A549 (cell line): ENCODE measurements at regions of chr20 and their contacts with region 1.

Region 1: GRCh38 chr20:49508435-49509199 is 26.1 kb upstream of the KCNB1 start:
- DNase-seq: peak; percentile 52 to 61
- ATAC-seq: peak; percentile 66 to 80
- H3K4me3 ChIP-seq: no peak overlapping the region
- H3K27ac ChIP-seq: peak overlapping the region; percentile 21 to 50; a peak in 2 of 6 replicates
- H3K4me1 ChIP-seq: peaks cover 12% of the 10 kb centered on the region; the same call in 1 of the 3 replicates
- CTCF ChIP-seq: peak; percentile 81
- EP300 ChIP-seq: no peak
- POLR2A ChIP-seq: no peak
- RAD21 ChIP-seq: peak; percentile 67 to 72

Region 2: GRCh38 chr20:49323622-49324238 is 184.9 kb before region 1 on chr20:
- CTCF ChIA-PET with region 1: interaction called, 219 read pairs
- POLR2A ChIA-PET with region 1: no interaction called
- DNase-seq: peak in 1 of 2 experiments; percentile 47
- ATAC-seq: peak; percentile 58 to 68
- H3K4me3 ChIP-seq: no peak overlapping the region
- H3K27ac ChIP-seq: no peak overlapping the region
- H3K4me1 ChIP-seq: peaks cover 4% of the 10 kb centered on the region; the same call in 1 of the 3 replicates
- CTCF ChIP-seq: no peak
- EP300 ChIP-seq: no peak
- POLR2A ChIP-seq: no peak
- RAD21 ChIP-seq: peak; percentile 33 to 44; a peak in 2 of 5 replicates

Region 3: DNA sequence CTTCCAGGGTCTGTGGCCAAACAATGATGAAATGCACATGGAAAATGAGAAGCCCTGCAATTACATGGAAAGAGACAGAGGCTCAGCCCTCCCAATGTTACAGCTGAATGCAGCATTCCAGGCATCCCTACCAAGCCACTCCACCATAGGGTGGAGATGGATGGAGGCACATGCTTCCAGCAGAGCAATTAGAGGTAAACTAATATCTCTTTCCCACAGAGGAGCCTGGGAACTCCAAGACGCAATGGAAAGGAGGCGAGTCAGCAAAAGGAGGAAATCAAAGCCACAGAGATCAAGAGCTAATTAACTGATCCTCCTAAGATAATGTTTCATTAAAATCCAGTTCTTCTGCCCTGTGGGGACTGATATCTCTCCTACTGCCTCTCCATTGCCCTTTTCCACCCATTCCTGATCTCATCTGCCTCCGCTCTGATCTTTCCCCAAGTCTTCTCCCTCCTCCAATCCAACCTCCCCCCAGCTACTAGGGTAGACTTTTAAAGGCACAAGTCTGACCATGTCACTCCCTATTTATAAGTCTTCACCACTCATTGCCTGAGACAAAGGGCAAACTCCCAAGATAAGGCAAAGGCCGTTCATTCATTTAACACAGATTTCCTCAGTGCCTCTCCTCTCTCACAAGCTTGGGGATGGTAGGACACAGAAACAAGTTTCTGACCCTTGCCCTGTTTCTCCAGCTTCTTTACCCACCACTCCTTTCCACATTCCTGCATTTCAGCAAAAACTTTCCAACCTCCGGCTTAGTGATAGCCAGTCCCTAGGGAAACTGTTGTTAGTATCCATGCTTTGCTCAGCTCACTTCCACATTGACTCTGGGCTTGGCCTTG is 11.8 kb before region 1 on chr20:
- CTCF ChIA-PET with region 1: interaction called, 28 read pairs
- POLR2A ChIA-PET with region 1: no interaction called
- DNase-seq: no peak
- ATAC-seq: no peak
- H3K4me3 ChIP-seq: no peak overlapping the region
- H3K27ac ChIP-seq: no peak overlapping the region
- H3K4me1 ChIP-seq: no peaks in the 10 kb centered on the region
- CTCF ChIP-seq: no peak
- EP300 ChIP-seq: no peak
- POLR2A ChIP-seq: no peak
- RAD21 ChIP-seq: no peak

Region 4: DNA sequence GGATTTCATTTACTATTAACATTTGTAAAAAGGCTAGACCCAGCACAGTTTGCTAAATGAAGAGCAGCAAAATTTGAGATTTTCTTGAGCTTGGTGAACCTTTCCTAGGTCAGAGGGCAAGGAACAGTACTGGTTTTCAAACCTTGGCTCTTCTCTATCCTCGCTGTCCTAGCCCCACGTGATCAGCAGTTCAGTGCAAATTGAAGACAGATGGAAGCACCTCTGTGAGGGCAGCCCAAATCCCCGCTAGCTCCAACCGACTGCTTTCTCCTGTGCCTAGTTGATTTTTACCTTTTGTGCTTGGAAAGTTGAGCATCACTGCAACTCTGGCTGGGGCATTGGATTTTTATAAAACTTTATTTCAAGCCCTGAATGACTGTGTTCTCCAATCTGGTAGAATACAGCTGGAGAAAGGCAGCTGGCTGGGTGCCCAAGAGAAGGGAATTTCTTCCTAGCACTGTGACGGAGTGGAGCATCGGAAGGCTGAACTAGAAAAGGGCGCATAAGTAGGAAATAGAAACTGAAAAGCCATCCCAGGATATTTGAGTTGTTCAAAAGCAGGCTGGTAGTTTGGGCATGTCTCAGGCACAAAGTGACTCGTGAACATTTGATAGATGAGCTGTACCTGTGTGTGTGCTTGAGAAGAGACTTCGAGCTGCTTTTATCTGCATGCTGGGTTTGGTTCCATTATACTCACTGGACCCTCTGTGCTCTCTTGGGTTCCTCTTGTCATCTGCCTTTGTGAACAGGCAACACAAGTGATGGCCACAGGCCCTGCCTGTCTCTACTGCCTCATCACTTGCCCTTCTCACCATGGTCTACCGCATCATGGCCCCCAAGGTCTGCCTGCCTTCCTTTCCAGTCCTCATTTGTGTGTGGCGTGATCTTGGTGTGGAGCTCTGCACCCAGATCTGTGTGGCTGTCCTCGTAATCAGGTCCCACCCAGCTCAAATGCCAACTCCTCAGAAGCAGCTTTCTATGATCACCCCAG is 429.9 kb after region 1 on chr20:
- CTCF ChIA-PET with region 1: no interaction called
- POLR2A ChIA-PET with region 1: no interaction called
- DNase-seq: no peak
- ATAC-seq: no peak
- H3K4me3 ChIP-seq: no peak overlapping the region
- H3K27ac ChIP-seq: peak overlapping the region in 1 of 2 experiments; percentile 95; a peak in 3 of 6 replicates
- H3K4me1 ChIP-seq: peaks cover 30% of the 10 kb centered on the region
- CTCF ChIP-seq: no peak
- EP300 ChIP-seq: no peak
- POLR2A ChIP-seq: no peak
- RAD21 ChIP-seq: no peak